GM12878 (cell line): ENCODE measurements at regions of chr18 and their contacts with region 1.

Region 1: GRCh38 chr18:73945130-73945792 is 202.4 kb downstream of the FBXO15 start:
- DNase-seq: no peak
- ATAC-seq: no peak
- H3K4me3 ChIP-seq: no peak overlapping the region
- H3K27ac ChIP-seq: no peak overlapping the region
- H3K4me1 ChIP-seq: no peaks in the 10 kb centered on the region
- H3K27me3 ChIP-seq: no peaks in the 10 kb centered on the region
- CTCF ChIP-seq: no peak
- EP300 ChIP-seq: no peak
- POLR2A ChIP-seq: no peak
- RAD21 ChIP-seq: no peak

Region 2: GRCh38 chr18:73879766-73880165 is 65.5 kb before region 1 on chr18:
- CTCF ChIA-PET with region 1: no interaction called
- POLR2A ChIA-PET with region 1: no interaction called
- RAD21 ChIA-PET with region 1: no interaction called
- SMC1A ChIA-PET with region 1: no interaction called
- in situ Hi-C with region 1: no loop called
- intact Hi-C with region 1: loop called (anchors 10 kb)
- DNase-seq: no peak
- ATAC-seq: no peak
- H3K4me3 ChIP-seq: no peak overlapping the region
- H3K27ac ChIP-seq: no peak overlapping the region
- H3K4me1 ChIP-seq: no peaks in the 10 kb centered on the region
- H3K27me3 ChIP-seq: no peaks in the 10 kb centered on the region
- CTCF ChIP-seq: no peak
- EP300 ChIP-seq: no peak
- POLR2A ChIP-seq: no peak
- RAD21 ChIP-seq: no peak